ENCODE measurements at regions of chr7 and their contacts with region 1.

Region 1: GRCh38 chr7:143408686-143409561 is at the start of gene EPHA1:
- DNase-seq: peak in 7 of 9 donors; percentile 52 to 67 (median 62)
- ATAC-seq: peak; percentile 83
- H3K4me3 ChIP-seq: peak within 1 kb of the TSS; percentile 59
- H3K4me3 Mint-ChIP-seq: peak within 1 kb of the TSS; percentile 77 to 98 (median 94)
- H3K27ac ChIP-seq: peak within 1 kb of the TSS; percentile 69
- H3K27ac Mint-ChIP-seq: peak within 1 kb of the TSS; percentile 61 to 97 (median 94)
- H3K4me1 ChIP-seq: peaks cover 31 to 44% of the 10 kb centered on the region in 2 donors
- H3K4me1 Mint-ChIP-seq: peaks cover 23 to 88% (median 87%) of the 10 kb centered on the region in 7 donors
- H3K27me3 ChIP-seq: no peaks in the 10 kb centered on the region
- H3K27me3 Mint-ChIP-seq: peaks cover 0 to 14% (median 0%) of the 10 kb centered on the region in 5 donors
- total RNA-seq, gene EPHA1: 4.1 to 63.1 (median 33.6) TPM

Region 2: DNA sequence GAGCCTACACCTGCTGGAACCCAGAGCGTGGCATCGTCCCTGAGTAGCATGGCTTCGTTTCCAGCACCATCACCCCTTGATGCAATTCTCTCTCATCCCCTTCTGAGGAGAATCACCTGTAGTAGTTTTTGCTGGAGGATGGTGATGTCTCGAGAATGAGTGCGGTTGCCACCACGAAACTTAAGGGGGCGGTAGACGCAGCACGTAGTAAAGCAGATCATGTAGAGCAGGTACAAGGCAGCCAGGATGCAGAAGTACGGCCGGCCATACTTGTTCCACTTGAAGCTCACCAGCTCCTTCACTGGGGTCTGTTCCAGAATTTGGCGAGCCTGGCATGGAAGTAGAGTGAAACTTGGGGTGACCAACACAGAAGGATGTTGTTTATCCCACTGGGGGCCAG is 483.5 kb before region 1 on chr7:
- CTCF ChIA-PET with region 1: no interaction called
- POLR2A ChIA-PET with region 1: no interaction called
- intact Hi-C with region 1: no loop called
- DNase-seq: no peak
- ATAC-seq: no peak
- H3K4me3 ChIP-seq: no peak overlapping the region
- H3K4me3 Mint-ChIP-seq: no peak overlapping the region
- H3K27ac ChIP-seq: no peak overlapping the region
- H3K27ac Mint-ChIP-seq: no peak overlapping the region
- H3K4me1 ChIP-seq: no peaks in the 10 kb centered on the region
- H3K4me1 Mint-ChIP-seq: peaks cover 0 to 2% (median 0%) of the 10 kb centered on the region in 7 donors
- H3K27me3 ChIP-seq: no peaks in the 10 kb centered on the region
- H3K27me3 Mint-ChIP-seq: peaks cover 0 to 6% (median 0%) of the 10 kb centered on the region in 5 donors

Region 3: DNA sequence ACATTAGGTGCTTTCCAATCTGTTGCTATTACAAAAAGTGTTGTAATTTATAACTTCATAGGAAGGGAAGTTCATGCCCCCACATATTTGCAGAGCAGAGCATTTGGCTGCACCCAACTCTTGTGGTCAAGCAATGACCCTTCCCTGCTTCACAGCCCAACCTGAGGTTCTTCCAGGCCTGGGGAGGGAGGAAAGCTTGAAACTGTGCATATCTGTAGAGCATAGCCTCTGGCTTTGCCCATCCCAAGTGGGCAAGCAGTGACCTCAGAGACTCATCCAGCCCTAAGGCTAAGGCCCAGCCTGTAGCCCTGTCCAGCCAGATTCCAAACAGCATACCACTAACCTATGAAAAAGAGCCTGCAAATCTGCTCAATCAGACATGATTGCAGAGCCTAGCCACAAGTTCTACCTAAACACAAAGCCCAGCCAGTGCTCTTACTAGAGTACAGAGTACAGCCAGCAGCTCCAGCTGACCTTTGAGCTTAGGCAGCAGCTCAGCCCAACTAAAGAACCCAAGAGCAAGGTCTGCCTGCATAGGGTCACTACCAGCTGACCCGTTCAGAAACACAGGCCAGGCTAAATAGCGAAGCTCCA is 160.1 kb before region 1 on chr7:
- CTCF ChIA-PET with region 1: interaction called, 3 read pairs
- POLR2A ChIA-PET with region 1: interaction called, 13 read pairs
- intact Hi-C with region 1: no loop called
- DNase-seq: no peak
- ATAC-seq: no peak
- H3K4me3 ChIP-seq: peak overlapping the region; percentile 13
- H3K4me3 Mint-ChIP-seq: peak overlapping the region in 9 of 10 donors; percentile 12 to 68 (median 34)
- H3K27ac ChIP-seq: no peak overlapping the region
- H3K27ac Mint-ChIP-seq: peak overlapping the region; percentile 25 to 89 (median 80)
- H3K4me1 ChIP-seq: peaks cover 56 to 60% of the 10 kb centered on the region in 2 donors
- H3K4me1 Mint-ChIP-seq: peaks cover 60 to 99% (median 97%) of the 10 kb centered on the region in 7 donors
- H3K27me3 ChIP-seq: no peaks in the 10 kb centered on the region
- H3K27me3 Mint-ChIP-seq: no peaks in the 10 kb centered on the region

Region 4: GRCh38 chr7:143362131-143363015 is 46.6 kb before region 1 on chr7 and contains the start of gene FAM131B:
- CTCF ChIA-PET with region 1: no interaction called
- POLR2A ChIA-PET with region 1: no interaction called
- intact Hi-C with region 1: loop called in 1 of 2 experiments (anchors 5 kb)
- DNase-seq: peak in 2 of 9 donors; percentile 31 to 34
- ATAC-seq: peak; percentile 83
- H3K4me3 ChIP-seq: peak within 1 kb of the TSS; percentile 59
- H3K4me3 Mint-ChIP-seq: peak within 1 kb of the TSS; percentile 59 to 91 (median 85)
- H3K27ac ChIP-seq: no peak within 1 kb of the TSS
- H3K27ac Mint-ChIP-seq: peak within 1 kb of the TSS in 3 of 9 donors; percentile 34 to 68 (median 41)
- H3K4me1 ChIP-seq: peaks cover 6% of the 10 kb centered on the region in 2 donors
- H3K4me1 Mint-ChIP-seq: peaks cover 3 to 17% (median 9%) of the 10 kb centered on the region in 7 donors
- H3K27me3 ChIP-seq: peaks cover 5 to 6% of the 10 kb centered on the region in 2 donors
- H3K27me3 Mint-ChIP-seq: peaks cover 19 to 81% (median 33%) of the 10 kb centered on the region in 5 donors
- total RNA-seq, gene FAM131B: 0.19 to 1.4 (median 0.53) TPM in 3 of 5 experiments, not detected in the others

Region 5: GRCh38 chr7:143380255-143380645 is 28.7 kb before region 1 on chr7:
- CTCF ChIA-PET with region 1: interaction called, 40 read pairs
- POLR2A ChIA-PET with region 1: interaction called, 223 read pairs
- intact Hi-C with region 1: loop called (anchors 1 kb)
- DNase-seq: peak; percentile 76 to 90 (median 84)
- ATAC-seq: peak; percentile 73
- H3K4me3 ChIP-seq: peak overlapping the region; percentile 92
- H3K4me3 Mint-ChIP-seq: peak overlapping the region in 9 of 10 donors; percentile 84 to 96 (median 91)
- H3K27ac ChIP-seq: peak overlapping the region; percentile 91
- H3K27ac Mint-ChIP-seq: peak overlapping the region; percentile 90 to 96 (median 93)
- H3K4me1 ChIP-seq: peaks cover 58 to 70% of the 10 kb centered on the region in 2 donors
- H3K4me1 Mint-ChIP-seq: peaks cover 35 to 46% (median 42%) of the 10 kb centered on the region in 7 donors
- H3K27me3 ChIP-seq: no peaks in the 10 kb centered on the region
- H3K27me3 Mint-ChIP-seq: no peaks in the 10 kb centered on the region

Region 6: DNA sequence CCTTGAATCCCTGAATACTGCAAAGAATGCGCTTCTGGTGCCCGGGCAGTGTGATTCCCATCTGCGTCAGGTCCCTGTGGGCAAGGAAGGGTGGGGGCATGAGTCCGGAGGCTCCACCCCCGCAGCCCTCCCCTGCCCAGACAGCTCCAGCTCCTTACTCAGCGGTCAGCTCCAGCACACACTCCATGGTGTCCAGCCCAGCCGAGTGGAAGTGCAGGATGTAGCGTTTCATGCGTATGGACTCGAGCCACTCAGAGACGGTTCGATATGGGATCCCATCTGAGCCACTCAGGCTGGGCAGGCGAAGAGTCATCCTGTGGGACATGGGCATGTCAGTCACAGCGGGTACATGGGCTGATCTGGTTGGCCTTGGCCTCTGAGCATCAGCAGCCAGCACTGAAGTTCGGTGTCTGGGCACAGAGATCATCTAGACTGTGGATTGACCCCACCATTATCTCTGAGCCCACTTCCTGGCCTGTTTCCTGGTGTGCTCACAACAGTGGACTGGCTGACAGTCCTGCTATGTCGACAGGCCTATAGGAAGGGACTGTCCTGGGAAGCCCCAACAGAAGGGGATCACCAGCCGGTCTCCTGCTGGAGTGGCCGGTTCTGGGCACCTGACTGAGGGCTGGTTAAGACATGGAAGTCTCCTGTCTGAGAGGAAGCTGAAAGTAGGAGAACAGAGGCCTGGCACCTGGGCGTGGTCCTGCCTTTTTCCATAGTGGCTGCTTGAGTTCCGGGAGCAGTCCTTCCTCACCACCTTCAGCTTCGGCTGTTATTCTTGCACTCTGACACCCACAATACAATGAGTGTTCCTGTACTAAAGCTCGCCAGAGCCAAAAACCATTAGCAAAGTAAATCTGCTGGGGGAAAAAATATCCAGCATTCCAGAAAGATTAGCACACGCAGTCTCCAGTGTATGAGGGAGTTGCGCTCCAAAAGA is 17.2 kb before region 1 on chr7:
- CTCF ChIA-PET with region 1: interaction called, 40 read pairs
- POLR2A ChIA-PET with region 1: interaction called, 223 read pairs
- intact Hi-C with region 1: loop called in 1 of 2 experiments (anchors 1 kb)
- DNase-seq: no peak
- ATAC-seq: no peak
- H3K4me3 ChIP-seq: no peak overlapping the region
- H3K4me3 Mint-ChIP-seq: no peak overlapping the region
- H3K27ac ChIP-seq: no peak overlapping the region
- H3K27ac Mint-ChIP-seq: peak overlapping the region in 5 of 9 donors; percentile 21 to 71 (median 62)
- H3K4me1 ChIP-seq: no peaks in the 10 kb centered on the region
- H3K4me1 Mint-ChIP-seq: peaks cover 7 to 25% (median 20%) of the 10 kb centered on the region in 7 donors
- H3K27me3 ChIP-seq: no peaks in the 10 kb centered on the region
- H3K27me3 Mint-ChIP-seq: no peaks in the 10 kb centered on the region

Measured in naive thymus-derived CD4-positive, alpha-beta T cell (primary cell).